GM18951 (cell line): ENCODE measurements at regions of chr5 and their contacts with region 1.

Region 1: GRCh38 chr5:6732634-6733410 is 19.6 kb downstream of the TENT4A start:
- POLR2A ChIP-seq: no peak

Region 2: DNA sequence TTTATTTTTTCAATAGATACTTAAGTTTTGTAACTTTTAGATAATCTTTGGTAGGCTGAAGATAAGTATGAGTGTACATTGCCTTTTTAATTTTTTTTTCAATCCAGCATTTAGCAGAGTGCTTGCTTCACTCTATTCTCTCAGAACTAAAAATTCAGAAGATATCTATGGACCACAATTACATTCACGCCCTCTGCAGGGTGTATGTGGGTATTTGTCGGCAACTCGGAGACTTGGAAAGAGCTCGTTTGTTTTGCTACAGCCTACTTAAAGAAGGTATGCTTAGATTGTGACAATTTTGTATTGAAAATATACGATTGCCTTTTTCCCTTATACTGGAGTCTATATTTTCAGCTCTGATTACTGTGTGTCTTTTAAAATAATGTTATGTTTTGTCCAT is 1266.6 kb before region 1 on chr5:
- in situ Hi-C with region 1: no loop called
- POLR2A ChIP-seq: no peak

Region 3: DNA sequence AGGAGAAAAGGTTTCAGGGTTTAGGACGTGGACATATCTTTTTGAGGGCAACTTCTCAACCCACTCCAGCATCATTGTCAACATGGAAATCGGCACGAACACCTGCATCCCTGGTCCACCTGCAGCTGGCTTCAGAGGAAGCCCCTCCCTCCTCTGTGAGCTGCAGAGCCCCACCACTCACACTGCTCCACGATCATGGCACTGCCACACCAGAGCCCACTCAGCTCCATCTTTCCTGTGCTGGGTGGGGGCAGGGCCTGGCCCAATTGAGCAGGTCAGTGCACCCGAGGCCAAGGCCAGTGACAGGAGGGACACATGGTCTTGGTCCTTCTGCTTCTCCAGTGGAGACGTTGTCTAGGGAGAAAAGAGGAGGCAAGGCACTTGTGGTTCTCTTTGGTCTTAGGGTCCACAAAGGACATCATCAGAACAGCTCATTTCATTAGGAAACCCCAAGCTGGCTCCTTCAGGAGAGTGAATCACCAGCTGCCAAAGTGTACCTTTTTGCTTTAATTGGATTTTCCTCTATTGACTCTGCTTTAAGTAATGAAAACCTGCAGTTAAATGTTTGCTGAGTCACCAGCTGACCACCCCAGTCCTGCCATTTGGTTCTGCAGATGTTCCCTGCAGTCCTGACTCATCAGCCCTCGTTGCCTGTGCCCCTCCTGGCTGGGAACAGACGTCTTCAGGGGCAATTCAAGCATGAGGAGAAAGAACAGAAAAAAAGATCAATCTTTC is 228.0 kb before region 1 on chr5:
- in situ Hi-C with region 1: loop called (anchors 10 kb)
- POLR2A ChIP-seq: no peak

Region 4: GRCh38 chr5:6644662-6645275 is 88.1 kb before region 1 on chr5:
- in situ Hi-C with region 1: loop called (anchors 10 kb)
- POLR2A ChIP-seq: no peak

Region 5: DNA sequence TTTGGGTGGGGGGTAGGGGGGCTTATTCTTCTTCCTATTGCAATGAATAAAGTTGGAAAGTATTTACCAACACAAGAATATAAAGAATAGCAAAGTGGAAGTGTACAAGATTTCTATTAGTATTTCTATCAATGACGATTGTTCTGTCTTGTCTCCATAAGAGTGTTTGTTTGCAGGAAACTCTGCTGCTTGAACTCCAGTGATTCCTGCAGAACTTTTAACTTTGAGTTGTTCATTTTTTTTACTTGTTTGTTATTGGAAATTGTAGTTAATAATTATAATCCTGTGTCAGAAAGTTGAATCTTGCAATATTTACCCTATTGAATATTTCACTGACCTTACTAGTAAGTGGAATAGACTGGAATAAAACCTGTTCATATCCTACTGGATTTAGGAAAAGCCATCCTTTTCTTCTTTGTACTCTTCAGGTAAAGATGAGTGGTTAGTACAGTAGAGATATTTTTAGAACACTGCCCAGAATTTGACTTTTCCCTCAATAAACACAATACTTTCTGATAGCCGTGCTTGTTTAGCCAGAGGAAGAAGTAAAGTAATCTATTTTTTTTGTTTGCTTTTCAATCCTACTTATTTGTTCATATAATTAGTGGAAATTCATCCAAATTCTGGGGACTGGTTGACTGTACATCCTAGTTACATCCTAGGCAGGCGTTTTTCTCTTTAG is 320.8 kb after region 1 on chr5:
- in situ Hi-C with region 1: no loop called
- POLR2A ChIP-seq: no peak